Activated naive CD4-positive, alpha-beta T cell treated with anti-CD3 and anti-CD28 coated beads for 36 hours (primary cell): ENCODE measurements at regions of chr6 and their contacts with region 1.

Region 1: GRCh38 chr6:127879685-127880084 is 21.2 kb downstream of the THEMIS start:
- DNase-seq: peak; percentile 36
- H3K4me3 Mint-ChIP-seq: peak overlapping the region; percentile 67
- H3K27ac Mint-ChIP-seq: peak overlapping the region; percentile 56
- H3K4me1 Mint-ChIP-seq: peaks cover 70% of the 10 kb centered on the region
- H3K27me3 Mint-ChIP-seq: no peaks in the 10 kb centered on the region

Region 2: GRCh38 chr6:127784468-127784867 is 95.2 kb before region 1 on chr6:
- CTCF ChIA-PET with region 1: no interaction called
- intact Hi-C with region 1: loop called (anchors 1 kb)
- DNase-seq: peak; percentile 59
- H3K4me3 Mint-ChIP-seq: peak overlapping the region; percentile 5
- H3K27ac Mint-ChIP-seq: peak overlapping the region; percentile 71
- H3K4me1 Mint-ChIP-seq: peaks cover 76% of the 10 kb centered on the region
- H3K27me3 Mint-ChIP-seq: no peaks in the 10 kb centered on the region

Region 3: DNA sequence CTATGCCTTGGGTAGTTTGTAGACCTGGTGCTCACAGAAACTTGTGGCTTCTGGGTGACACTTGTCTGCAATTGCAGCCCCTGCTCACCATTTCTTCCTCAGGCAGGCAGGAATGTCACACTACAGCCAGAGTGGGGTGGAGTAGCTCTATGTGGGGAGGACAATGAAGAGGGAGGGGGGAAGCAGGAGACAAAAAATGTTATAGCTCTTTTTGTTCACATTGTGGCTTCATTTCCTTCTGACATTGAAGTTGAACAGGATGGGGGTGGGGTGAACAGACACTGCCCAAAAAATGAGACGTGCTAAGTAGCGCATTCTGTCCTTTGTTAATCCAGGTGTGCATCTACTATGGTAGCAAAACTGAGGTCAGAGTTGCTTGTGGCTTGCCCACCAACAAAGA is 21.2 kb after region 1 on chr6 and contains the start of gene THEMIS:
- CTCF ChIA-PET with region 1: interaction called, 5 read pairs
- intact Hi-C with region 1: loop called (anchors 1 kb)
- DNase-seq: peak; percentile 52
- H3K4me3 Mint-ChIP-seq: peak within 1 kb of the TSS; percentile 81
- H3K27ac Mint-ChIP-seq: peak within 1 kb of the TSS; percentile 94
- H3K4me1 Mint-ChIP-seq: peaks cover 57% of the 10 kb centered on the region
- H3K27me3 Mint-ChIP-seq: no peaks in the 10 kb centered on the region
- total RNA-seq, gene THEMIS: 7.0 to 7.4 TPM

Region 4: DNA sequence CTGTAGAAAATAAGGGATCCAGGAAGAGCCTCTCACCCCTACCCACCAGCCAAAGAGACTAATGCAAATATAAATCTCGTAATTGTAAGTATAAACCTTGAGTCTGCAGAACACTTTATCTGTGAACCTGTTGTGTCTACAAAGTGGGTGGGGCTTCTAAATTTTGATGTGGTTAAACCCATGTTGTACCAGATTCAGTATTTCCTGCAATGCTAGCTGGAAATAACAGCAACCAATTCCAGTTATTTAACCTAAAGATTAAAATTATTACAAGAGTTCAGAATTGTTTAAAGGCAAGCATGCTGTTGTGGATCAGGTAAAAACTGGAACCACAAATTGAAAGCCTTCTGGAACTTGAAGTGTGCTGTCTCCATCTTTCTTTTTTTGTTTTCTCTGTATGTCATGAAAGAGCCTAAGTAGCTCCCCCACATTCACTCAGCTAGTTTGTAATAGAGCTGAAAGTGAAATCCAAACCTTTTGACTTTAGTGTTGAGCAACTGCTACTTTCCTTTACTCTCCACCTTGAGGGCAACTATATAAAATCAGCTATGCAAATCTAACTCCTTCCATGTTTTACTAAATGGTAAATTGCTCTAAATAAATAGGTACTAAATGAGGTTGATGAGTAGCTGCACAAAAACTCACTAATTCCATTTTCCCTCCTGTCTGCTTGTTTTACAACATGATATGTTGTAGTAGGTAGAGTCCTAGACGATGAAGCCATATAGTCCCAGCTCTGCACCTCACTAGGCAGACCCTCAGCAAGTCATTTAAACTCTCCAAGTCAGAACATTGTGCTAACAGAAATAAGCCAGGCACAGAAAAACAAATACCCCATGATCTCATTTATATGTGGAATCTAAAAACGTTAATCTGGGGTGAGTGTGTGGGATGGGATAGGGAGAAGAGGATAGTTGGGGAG is 39.1 kb after region 1 on chr6:
- CTCF ChIA-PET with region 1: interaction called, 4 read pairs
- intact Hi-C with region 1: loop called (anchors 1 kb)
- DNase-seq: no peak
- H3K4me3 Mint-ChIP-seq: peak overlapping the region; percentile 32
- H3K27ac Mint-ChIP-seq: peak overlapping the region; percentile 31
- H3K4me1 Mint-ChIP-seq: peaks cover 80% of the 10 kb centered on the region
- H3K27me3 Mint-ChIP-seq: no peaks in the 10 kb centered on the region

Region 5: GRCh38 chr6:127951172-127951917 is 71.7 kb after region 1 on chr6:
- CTCF ChIA-PET with region 1: no interaction called
- intact Hi-C with region 1: loop called (anchors 1 kb)
- DNase-seq: no peak
- H3K4me3 Mint-ChIP-seq: peak overlapping the region; percentile 37
- H3K27ac Mint-ChIP-seq: peak overlapping the region; percentile 66
- H3K4me1 Mint-ChIP-seq: peaks cover 62% of the 10 kb centered on the region
- H3K27me3 Mint-ChIP-seq: no peaks in the 10 kb centered on the region